Dendritic cell treated with granulocyte-macrophage colony-stimulating factor and Interleukin-4, amounts not matched to agents 40 ng/mL and 50 ng/mL, for 4 days (primary cell): ENCODE measurements at regions of chr10 and their contacts with region 1.

Region 1: GRCh38 chr10:79293841-79294634 is 53.2 kb upstream of the PPIF start:
- H3K4me3 Mint-ChIP-seq: peak overlapping the region; percentile 49
- H3K27ac Mint-ChIP-seq: peak overlapping the region; percentile 91
- H3K4me1 Mint-ChIP-seq: peaks cover 98% of the 10 kb centered on the region
- H3K27me3 Mint-ChIP-seq: no peaks in the 10 kb centered on the region

Region 2: GRCh38 chr10:79239275-79239779 is 54.7 kb before region 1 on chr10:
- intact Hi-C with region 1: loop called (anchors 2 kb)
- H3K4me3 Mint-ChIP-seq: no peak overlapping the region
- H3K27ac Mint-ChIP-seq: peak overlapping the region; percentile 87
- H3K4me1 Mint-ChIP-seq: peaks cover 84% of the 10 kb centered on the region
- H3K27me3 Mint-ChIP-seq: no peaks in the 10 kb centered on the region

Region 3: GRCh38 chr10:79347226-79347893 is 53.3 kb after region 1 on chr10 and contains the start of gene PPIF:
- intact Hi-C with region 1: loop called (anchors 2 kb)
- H3K4me3 Mint-ChIP-seq: peak within 1 kb of the TSS; percentile 86
- H3K27ac Mint-ChIP-seq: peak within 1 kb of the TSS; percentile 95
- H3K4me1 Mint-ChIP-seq: peaks cover 87% of the 10 kb centered on the region
- H3K27me3 Mint-ChIP-seq: peaks cover 3% of the 10 kb centered on the region

Region 4: GRCh38 chr10:79595510-79595909 is 301.5 kb after region 1 on chr10:
- intact Hi-C with region 1: no loop called
- H3K4me3 Mint-ChIP-seq: no peak overlapping the region
- H3K27ac Mint-ChIP-seq: no peak overlapping the region
- H3K4me1 Mint-ChIP-seq: no peaks in the 10 kb centered on the region
- H3K27me3 Mint-ChIP-seq: no peaks in the 10 kb centered on the region

Region 5: DNA sequence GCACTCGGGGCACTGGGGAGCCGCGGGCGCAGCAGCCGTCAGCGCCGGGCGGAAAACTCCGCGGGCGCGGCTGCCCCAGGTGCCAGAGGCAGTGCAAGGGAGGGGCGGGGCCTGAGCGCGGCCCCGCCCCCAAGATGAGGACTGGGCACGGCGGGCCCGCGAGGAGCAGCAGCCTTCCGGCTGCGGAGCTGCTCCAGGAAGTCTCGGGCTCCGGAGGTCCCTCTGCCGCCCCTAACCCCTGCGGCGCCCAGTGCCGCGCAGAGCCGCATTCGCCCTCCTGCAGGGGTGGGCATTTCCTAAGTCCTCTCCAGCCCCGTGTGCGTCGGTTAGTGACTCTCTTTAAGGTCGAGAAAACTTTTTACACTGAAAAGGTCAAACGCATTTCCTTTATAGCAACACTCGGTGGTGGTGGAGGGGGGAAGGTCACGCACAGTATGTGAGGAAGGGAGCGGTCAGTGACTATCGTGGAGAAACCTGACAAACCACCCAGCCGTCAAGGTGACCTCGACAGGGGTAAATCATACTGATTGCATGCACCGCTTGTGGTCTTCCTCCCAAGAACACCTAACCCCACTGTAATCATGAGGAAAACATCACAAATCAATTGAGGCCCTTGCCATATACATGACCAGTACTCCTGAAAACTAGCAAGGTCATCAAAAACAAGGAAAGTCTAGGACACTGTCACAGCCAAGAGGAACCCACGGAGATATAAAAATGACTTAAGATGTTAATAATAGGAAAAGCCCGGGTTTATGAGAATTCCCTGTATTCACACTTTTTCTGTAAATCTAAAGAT is 911.6 kb after region 1 on chr10 and contains the start of gene ANXA11:
- intact Hi-C with region 1: no loop called
- H3K4me3 Mint-ChIP-seq: peak within 1 kb of the TSS; percentile 88
- H3K27ac Mint-ChIP-seq: peak within 1 kb of the TSS; percentile 98
- H3K4me1 Mint-ChIP-seq: peaks cover 45% of the 10 kb centered on the region
- H3K27me3 Mint-ChIP-seq: no peaks in the 10 kb centered on the region